ENCODE measurements at regions of chr17 and their contacts with region 1.

Region 1: GRCh38 chr17:49646391-49647255 is 31.3 kb downstream of the SPOP start:
- DNase-seq: peak; percentile 24
- H3K4me3 ChIP-seq: peak overlapping the region in 1 of 4 donors; percentile 20
- H3K27ac ChIP-seq: peak overlapping the region; percentile 74 to 85 (median 81)
- H3K4me1 ChIP-seq: peaks cover 0 to 34% (median 14%) of the 10 kb centered on the region in 4 donors
- H3K27me3 ChIP-seq: no peaks in the 10 kb centered on the region
- CTCF ChIP-seq: no peak
- EP300 ChIP-seq: peak; percentile 61
- POLR2A ChIP-seq: peak; percentile 24

Region 2: DNA sequence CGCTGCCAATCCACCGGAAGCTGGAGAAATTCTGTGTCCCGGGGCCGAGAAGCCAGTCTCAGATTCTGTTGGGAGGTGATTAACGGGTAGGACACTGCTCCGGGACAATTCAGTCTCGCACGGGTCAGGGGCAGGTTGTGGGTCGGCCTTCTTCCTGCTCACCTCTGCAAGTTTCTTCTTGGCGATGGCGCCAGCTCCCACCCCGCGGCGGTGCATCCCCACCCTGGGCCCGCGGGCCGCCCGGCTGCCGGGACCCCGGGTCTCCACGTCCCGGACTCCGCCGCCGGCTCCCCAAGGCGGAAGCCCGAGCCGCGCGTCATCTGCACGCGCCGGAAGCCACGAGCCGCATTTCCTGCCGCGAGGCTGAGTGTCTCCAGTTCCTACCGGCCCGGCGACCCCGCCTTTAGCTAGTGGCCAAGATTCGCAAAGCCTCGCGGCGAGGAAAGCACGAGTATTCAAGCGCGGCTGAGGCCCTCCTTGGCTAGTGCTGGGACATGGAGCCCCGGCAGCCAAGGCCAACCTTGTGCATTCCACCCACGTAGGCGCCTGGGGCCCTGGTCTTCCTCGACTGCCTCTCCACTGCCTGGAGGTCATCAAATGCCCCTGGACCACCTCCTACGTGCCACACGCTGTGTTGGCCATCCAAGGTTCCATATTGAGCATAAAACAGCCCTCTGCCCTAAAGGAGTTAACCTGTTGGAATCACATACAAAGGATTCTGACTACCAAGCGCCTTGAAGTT is 701.9 kb before region 1 on chr17 and contains the start of gene SNF8:
- in situ Hi-C with region 1: no loop called
- intact Hi-C with region 1: no loop called
- DNase-seq: peak; percentile 93
- H3K4me3 ChIP-seq: peak within 1 kb of the TSS; percentile 61 to 93 (median 72)
- H3K27ac ChIP-seq: peak within 1 kb of the TSS; percentile 87 to 91 (median 88)
- H3K4me1 ChIP-seq: peaks cover 11 to 26% (median 23%) of the 10 kb centered on the region in 4 donors
- H3K27me3 ChIP-seq: peaks cover 2% of the 10 kb centered on the region
- CTCF ChIP-seq: no peak
- EP300 ChIP-seq: no peak
- POLR2A ChIP-seq: peak; percentile 87
- total RNA-seq, gene SNF8: 44.1 to 67.7 (median 62.0) TPM

Region 3: DNA sequence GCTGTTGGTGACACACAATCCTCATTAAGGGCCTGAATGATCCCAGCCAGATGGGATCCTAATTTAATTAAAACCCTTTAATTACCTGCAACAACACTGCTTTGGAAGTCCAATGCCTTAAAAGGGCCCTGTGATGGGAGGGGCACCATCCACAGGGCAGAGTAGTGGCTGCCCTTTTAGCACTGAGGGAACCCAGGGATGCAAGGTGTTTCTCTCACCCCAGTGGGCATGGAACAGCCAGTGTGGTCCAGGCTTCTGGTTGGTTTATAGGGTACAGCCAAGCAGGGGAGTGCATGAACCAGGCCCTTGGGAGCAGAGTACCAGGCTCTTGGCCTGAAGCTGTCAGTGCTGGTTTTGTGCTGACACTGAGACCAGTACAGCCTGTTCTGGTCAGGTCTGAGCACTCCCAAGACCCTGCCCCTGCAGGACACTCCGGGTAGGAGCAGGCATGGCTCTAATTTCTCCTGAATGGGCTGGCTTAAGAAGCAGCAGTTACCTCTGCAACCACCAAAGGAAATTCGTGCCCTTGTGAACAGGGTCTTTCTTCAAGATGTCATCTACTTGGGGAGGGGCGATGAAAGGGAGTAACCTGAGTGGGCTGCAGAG is 61.1 kb before region 1 on chr17:
- in situ Hi-C with region 1: no loop called
- intact Hi-C with region 1: no loop called
- DNase-seq: no peak
- H3K4me3 ChIP-seq: no peak overlapping the region
- H3K27ac ChIP-seq: no peak overlapping the region
- H3K4me1 ChIP-seq: no peaks in the 10 kb centered on the region
- H3K27me3 ChIP-seq: no peaks in the 10 kb centered on the region
- CTCF ChIP-seq: no peak
- EP300 ChIP-seq: no peak
- POLR2A ChIP-seq: no peak

Region 4: GRCh38 chr17:49694847-49695683 is 48.4 kb after region 1 on chr17:
- in situ Hi-C with region 1: no loop called
- intact Hi-C with region 1: loop called (anchors 5 kb)
- DNase-seq: peak; percentile 72
- H3K4me3 ChIP-seq: no peak overlapping the region
- H3K27ac ChIP-seq: peak overlapping the region in 1 of 4 donors; percentile 6
- H3K4me1 ChIP-seq: peaks cover 0 to 24% (median 10%) of the 10 kb centered on the region in 4 donors
- H3K27me3 ChIP-seq: no peaks in the 10 kb centered on the region
- CTCF ChIP-seq: peak; percentile 91 to 96 (median 93)
- EP300 ChIP-seq: no peak
- POLR2A ChIP-seq: no peak

Region 5: DNA sequence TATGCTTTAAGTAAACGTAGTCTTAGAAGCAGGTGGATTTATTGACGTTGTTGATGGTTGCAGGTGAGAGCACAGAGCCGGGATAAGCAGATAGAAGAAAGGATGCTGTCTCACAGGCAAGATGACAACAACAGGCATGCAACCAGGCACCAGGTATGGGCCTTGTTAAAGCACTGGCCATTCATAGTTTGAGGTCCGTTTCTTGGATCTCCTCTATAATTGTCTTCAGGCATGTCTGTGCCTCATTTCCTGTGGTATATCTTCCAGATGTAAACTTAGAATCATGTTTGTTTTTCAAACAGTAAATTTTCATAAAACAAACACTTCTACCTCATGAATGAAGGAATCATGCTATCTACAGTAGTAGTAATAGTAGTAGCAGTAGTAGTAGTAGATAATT is 162.4 kb after region 1 on chr17:
- in situ Hi-C with region 1: no loop called
- intact Hi-C with region 1: no loop called
- DNase-seq: no peak
- H3K4me3 ChIP-seq: no peak overlapping the region
- H3K27ac ChIP-seq: no peak overlapping the region
- H3K4me1 ChIP-seq: no peaks in the 10 kb centered on the region
- H3K27me3 ChIP-seq: no peaks in the 10 kb centered on the region
- CTCF ChIP-seq: no peak
- EP300 ChIP-seq: no peak
- POLR2A ChIP-seq: no peak